Pancreas (tissue), 10 donors: ENCODE measurements at regions of chr2 and their contacts with region 1.

Region 1: DNA sequence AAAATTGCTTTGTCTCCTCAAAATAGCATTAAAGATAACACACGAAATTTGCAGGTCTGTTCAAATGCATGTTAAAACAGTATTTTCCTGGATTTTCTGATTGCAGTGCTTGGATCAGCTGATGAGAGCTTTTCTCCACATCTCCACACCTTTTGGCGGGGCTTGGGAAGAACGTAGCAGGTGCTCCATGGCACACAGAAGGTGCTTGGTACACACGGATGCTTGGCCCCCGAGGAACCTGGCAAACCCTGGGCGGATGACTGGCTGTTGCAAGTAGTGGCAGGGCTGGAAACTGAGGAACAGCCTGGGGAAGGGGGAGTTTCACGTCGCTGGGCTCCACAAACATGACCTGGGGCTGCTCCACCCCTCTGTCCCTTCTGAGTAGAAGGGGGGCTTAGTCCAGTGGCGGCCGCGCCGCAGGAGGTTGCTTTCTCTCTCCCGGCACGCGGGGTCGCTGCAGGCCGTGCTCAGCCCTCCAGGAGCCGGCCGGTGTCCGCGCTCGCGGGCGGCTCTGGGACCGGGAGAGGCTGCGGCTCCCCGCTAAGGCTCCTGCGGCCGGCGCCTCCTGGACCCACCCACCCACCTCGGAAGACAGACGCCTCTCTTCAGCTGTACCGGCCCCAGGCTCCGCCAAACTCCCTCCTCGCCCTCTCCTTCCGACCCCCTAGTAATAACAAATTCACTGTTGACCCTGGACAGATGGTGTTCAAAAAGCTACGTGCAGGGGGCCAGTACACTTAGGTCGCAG is 69.3 kb downstream of the MARCO start:
- DNase-seq: peak; percentile 26 to 90 (median 64)
- ATAC-seq: peak; percentile 93 to 99 (median 97)
- H3K4me3 ChIP-seq: peak overlapping the region in 2 of 4 donors; percentile 13 to 17
- H3K27ac ChIP-seq: no peak overlapping the region
- H3K4me1 ChIP-seq: no peaks in the 10 kb centered on the region
- H3K27me3 ChIP-seq: no peaks in the 10 kb centered on the region
- CTCF ChIP-seq: peak; percentile 21 to 62 (median 48)

Region 2: DNA sequence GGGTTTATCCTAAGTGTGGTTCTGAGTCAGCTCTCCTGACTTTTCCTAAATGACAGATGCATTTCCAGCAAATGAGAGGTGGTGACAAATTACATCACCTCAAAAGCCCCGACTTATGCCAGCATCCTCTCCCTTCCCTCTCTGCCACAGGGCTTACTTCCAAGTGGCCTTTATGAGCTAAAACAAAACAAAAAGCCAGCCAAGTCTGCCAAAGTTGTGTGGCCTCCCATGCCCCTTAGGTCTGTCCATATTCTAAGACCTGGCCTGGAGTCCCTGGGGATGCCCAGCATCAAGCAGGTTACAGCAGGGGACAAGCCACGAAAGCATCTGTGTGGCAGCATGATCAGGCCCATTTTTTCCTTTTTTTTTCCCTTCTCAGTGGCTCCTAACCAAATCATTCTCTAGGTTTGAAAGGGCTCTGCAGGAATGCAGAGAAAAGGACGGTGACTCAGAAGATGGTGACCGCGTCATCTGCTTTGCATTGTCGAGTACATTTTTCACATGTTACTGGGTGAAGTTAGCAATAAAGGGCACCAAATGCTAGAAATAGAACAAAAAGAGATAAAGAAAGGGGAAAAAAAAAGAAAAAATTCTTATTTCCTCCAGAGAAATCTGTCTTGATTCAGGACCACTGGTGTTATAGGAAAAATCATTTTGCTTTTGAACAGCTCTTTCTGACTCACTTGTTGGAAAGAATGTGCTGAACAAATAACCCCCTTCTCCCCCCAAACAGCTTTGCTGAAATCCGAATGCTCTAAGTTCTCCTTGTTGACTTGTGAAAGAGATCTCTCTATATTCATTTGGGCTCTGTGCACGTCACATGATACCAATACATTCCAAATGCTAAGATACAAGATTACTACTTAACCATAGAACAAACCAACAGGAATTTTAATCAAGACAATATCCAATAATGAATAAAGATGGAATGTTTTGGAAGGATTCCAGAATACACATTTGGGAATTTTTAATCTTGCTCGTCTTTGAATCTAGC is 342.6 kb before region 1 on chr2:
- intact Hi-C with region 1: no loop called
- DNase-seq: no peak
- ATAC-seq: peak in 2 of 4 donors; percentile 42 to 49
- H3K4me3 ChIP-seq: no peak overlapping the region
- H3K27ac ChIP-seq: no peak overlapping the region
- H3K4me1 ChIP-seq: no peaks in the 10 kb centered on the region
- H3K27me3 ChIP-seq: no peaks in the 10 kb centered on the region
- CTCF ChIP-seq: no peak

Region 3: GRCh38 chr2:119283860-119284331 is 272.6 kb after region 1 on chr2:
- intact Hi-C with region 1: loop called in 1 of 3 experiments (anchors 10 kb)
- DNase-seq: peak in 2 of 6 donors; percentile 41 to 55
- ATAC-seq: peak in 3 of 4 donors; percentile 67 to 86 (median 70)
- H3K4me3 ChIP-seq: no peak overlapping the region
- H3K27ac ChIP-seq: peak overlapping the region in 2 of 4 donors; percentile 26 to 53
- H3K4me1 ChIP-seq: peaks cover 0 to 7% (median 0%) of the 10 kb centered on the region in 3 donors
- H3K27me3 ChIP-seq: no peaks in the 10 kb centered on the region
- CTCF ChIP-seq: no peak

Region 4: GRCh38 chr2:119290859-119291587 is 279.7 kb after region 1 on chr2:
- intact Hi-C with region 1: loop called in 2 of 3 experiments (anchors 10 kb)
- DNase-seq: peak; percentile 56 to 92 (median 84)
- ATAC-seq: peak; percentile 90 to 95 (median 92)
- H3K4me3 ChIP-seq: no peak overlapping the region
- H3K27ac ChIP-seq: no peak overlapping the region
- H3K4me1 ChIP-seq: peaks cover 5 to 13% (median 11%) of the 10 kb centered on the region in 3 donors
- H3K27me3 ChIP-seq: no peaks in the 10 kb centered on the region
- CTCF ChIP-seq: peak; percentile 14 to 91 (median 62)

Region 5: DNA sequence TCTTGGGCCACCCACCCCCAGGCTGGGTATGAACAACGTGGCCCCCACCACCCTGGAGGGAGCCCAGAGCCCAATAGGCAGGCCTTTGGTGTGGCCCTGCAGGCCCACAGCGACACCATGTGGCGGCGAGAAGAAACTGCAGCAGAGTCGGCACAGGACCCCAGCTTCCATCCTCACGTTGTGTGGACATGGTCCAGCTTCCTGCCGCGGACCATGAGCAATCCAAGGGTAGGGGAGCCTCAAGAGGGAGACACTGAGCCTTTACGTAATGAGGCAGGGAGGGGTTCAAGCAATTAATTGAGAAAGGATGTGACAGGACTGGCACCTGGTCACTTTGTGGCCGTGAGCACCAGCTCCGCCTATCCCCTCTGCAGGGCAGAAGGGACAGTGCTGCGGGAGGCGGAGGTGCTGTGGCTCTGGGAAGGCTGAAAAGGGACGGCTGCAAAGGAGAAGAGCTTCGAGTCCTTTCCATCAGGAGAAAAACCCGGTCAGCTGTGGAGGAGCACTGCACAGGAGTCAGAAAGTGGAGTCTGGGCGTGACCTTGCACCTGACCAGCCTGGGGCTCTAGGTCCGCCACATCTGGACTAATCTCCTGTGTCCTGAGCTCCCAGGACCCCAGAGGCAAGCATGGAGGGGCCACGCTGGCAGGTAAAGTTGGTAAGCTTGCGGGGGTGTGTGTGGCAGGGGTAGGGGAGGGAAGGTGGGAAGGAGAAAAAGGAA is 465.1 kb after region 1 on chr2:
- intact Hi-C with region 1: loop called in 1 of 3 experiments (anchors 10 kb)
- DNase-seq: peak in 5 of 6 donors; percentile 61 to 80 (median 73)
- ATAC-seq: peak; percentile 64 to 88 (median 82)
- H3K4me3 ChIP-seq: peak overlapping the region in 2 of 4 donors; percentile 31 to 43
- H3K27ac ChIP-seq: peak overlapping the region in 2 of 4 donors; percentile 62 to 93
- H3K4me1 ChIP-seq: peaks cover 12 to 14% (median 13%) of the 10 kb centered on the region in 3 donors
- H3K27me3 ChIP-seq: no peaks in the 10 kb centered on the region
- CTCF ChIP-seq: peak; percentile 93 to 98 (median 95)